ENCODE measurements at regions of chr21 and their contacts with region 1.

Region 1: DNA sequence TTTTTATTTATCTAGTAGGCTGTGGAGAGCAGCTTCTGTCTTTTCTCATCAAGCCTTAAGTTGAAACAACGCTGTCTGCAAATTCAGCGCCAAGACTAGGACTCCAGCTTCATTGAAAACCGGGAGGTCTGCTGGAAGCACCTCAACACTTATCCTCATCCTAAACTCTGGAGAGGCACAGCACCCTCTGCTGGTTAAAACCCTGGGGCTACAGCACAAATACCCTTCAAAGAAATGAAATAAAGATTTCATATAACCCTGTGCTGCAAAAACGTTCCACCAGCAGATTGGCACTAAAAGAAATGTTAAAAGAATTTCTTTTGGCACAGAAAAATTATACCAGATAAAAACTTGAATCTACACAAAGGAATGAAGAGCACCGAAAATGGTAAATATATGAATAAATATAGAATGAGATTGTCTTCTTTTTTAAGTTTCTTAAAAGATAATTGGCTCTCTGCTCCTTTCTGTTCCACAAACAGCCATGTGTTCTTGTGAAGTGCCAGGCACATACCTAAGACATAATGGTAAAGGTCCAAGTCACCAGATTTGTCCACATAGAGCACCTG is 227.7 kb upstream of the SAMSN1 start:
- DNase-seq: peak; percentile 37
- H3K4me3 Mint-ChIP-seq: no peak overlapping the region
- H3K27ac Mint-ChIP-seq: no peak overlapping the region
- H3K4me1 Mint-ChIP-seq: peaks cover 1% of the 10 kb centered on the region
- H3K27me3 Mint-ChIP-seq: peaks cover 15% of the 10 kb centered on the region

Region 2: GRCh38 chr21:14259747-14260146 is 514.1 kb before region 1 on chr21:
- intact Hi-C with region 1: loop called (anchors 5 kb)
- DNase-seq: no peak
- H3K4me3 Mint-ChIP-seq: no peak overlapping the region
- H3K27ac Mint-ChIP-seq: no peak overlapping the region
- H3K4me1 Mint-ChIP-seq: peaks cover 2% of the 10 kb centered on the region
- H3K27me3 Mint-ChIP-seq: peaks cover 14% of the 10 kb centered on the region

Region 3: GRCh38 chr21:14403681-14404318 is 370.1 kb before region 1 on chr21:
- intact Hi-C with region 1: loop called (anchors 1 kb)
- DNase-seq: no peak
- H3K4me3 Mint-ChIP-seq: no peak overlapping the region
- H3K27ac Mint-ChIP-seq: no peak overlapping the region
- H3K4me1 Mint-ChIP-seq: peaks cover 1% of the 10 kb centered on the region
- H3K27me3 Mint-ChIP-seq: peaks cover 4% of the 10 kb centered on the region

Region 4: GRCh38 chr21:14448784-14449183 is 325.1 kb before region 1 on chr21:
- intact Hi-C with region 1: loop called (anchors 10 kb)
- DNase-seq: no peak
- H3K4me3 Mint-ChIP-seq: no peak overlapping the region
- H3K27ac Mint-ChIP-seq: no peak overlapping the region
- H3K4me1 Mint-ChIP-seq: peaks cover 44% of the 10 kb centered on the region
- H3K27me3 Mint-ChIP-seq: no peaks in the 10 kb centered on the region

Region 5: GRCh38 chr21:14686466-14687267 is 87.2 kb before region 1 on chr21:
- intact Hi-C with region 1: no loop called
- DNase-seq: no peak
- H3K4me3 Mint-ChIP-seq: no peak overlapping the region
- H3K27ac Mint-ChIP-seq: no peak overlapping the region
- H3K4me1 Mint-ChIP-seq: peaks cover 44% of the 10 kb centered on the region
- H3K27me3 Mint-ChIP-seq: no peaks in the 10 kb centered on the region

Region 6: GRCh38 chr21:14736162-14736561 is 37.7 kb before region 1 on chr21:
- intact Hi-C with region 1: no loop called
- DNase-seq: no peak
- H3K4me3 Mint-ChIP-seq: no peak overlapping the region
- H3K27ac Mint-ChIP-seq: peak overlapping the region; percentile 10
- H3K4me1 Mint-ChIP-seq: peaks cover 41% of the 10 kb centered on the region
- H3K27me3 Mint-ChIP-seq: no peaks in the 10 kb centered on the region

Region 7: GRCh38 chr21:14797543-14797942 is 23.7 kb after region 1 on chr21:
- intact Hi-C with region 1: no loop called
- DNase-seq: no peak
- H3K4me3 Mint-ChIP-seq: no peak overlapping the region
- H3K27ac Mint-ChIP-seq: no peak overlapping the region
- H3K4me1 Mint-ChIP-seq: no peaks in the 10 kb centered on the region
- H3K27me3 Mint-ChIP-seq: peaks cover 2% of the 10 kb centered on the region

Region 8: DNA sequence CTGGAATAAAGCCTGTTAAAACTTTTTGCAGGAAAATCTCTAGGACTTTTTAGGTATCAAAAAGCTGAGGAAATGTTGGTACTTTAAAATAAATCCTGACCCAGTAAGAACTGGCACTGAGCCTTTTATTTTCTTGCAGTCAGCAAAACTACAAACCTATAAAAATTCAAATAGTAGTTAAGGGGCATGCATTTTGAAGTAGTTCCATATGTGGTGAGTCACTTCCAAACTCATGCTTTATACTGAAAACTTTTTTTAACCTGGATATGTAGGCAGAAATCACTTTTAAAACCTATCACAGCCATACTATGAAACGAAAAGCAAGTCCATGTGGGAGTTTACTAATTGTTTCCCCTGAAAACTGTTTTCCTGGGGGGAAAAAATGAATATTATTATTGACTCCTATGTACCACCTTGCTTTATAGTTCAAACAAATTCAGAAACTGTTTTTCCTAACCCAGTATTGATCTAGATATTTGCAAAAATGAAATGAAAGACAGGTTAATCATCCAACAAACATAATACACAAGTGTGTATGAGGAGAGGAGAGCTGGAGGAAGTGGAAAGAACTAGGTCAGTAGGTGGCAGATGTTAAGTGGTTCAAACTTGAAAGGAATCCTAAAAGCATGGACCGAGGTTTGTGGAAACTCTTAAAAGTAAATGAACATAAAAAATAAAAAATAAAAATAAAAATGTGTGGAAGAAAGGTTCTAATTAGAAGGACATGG is 260.4 kb after region 1 on chr21:
- intact Hi-C with region 1: no loop called
- DNase-seq: no peak
- H3K4me3 Mint-ChIP-seq: no peak overlapping the region
- H3K27ac Mint-ChIP-seq: no peak overlapping the region
- H3K4me1 Mint-ChIP-seq: peaks cover 8% of the 10 kb centered on the region
- H3K27me3 Mint-ChIP-seq: no peaks in the 10 kb centered on the region

Measured in activated T-helper 2 cell treated with anti-CD3 and anti-CD28 coated beads, Interferon-gamma antibody, Interleukin-2, Interleukin-4, amounts not matched to agents 10 μg/mL and 5 μg/mL and 100 μg/mL, durations not matched to agents 14 hours and 24 hours and 36 hours (primary cell).